Activated naive CD4-positive, alpha-beta T cell treated with anti-CD3 and anti-CD28 coated beads for 36 hours (primary cell): ENCODE measurements at regions of chr9 and their contacts with region 1.

Region 1: DNA sequence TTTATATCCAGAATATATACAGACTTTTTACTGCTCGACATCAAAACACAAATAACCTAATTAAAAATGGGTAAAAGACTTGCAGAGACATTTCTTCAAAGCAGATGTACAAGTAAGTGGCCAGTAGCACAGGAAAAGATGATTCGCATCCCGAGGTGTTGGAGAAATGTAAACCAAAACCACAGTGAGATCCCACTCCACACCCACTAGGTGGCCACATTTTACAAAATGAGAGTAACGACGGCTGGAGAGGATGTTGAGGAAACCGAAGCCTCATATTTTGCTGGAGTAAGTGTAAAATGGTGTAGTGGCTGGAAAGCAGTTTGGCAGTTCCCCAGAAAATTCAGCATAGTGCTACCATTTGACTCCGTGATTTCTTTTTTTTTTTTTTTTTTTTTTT is 21.2 kb upstream of the GBGT1 start:
- DNase-seq: peak; percentile 69
- H3K4me3 Mint-ChIP-seq: no peak overlapping the region
- H3K27ac Mint-ChIP-seq: no peak overlapping the region
- H3K4me1 Mint-ChIP-seq: peaks cover 14% of the 10 kb centered on the region
- H3K27me3 Mint-ChIP-seq: peaks cover 36% of the 10 kb centered on the region

Region 2: DNA sequence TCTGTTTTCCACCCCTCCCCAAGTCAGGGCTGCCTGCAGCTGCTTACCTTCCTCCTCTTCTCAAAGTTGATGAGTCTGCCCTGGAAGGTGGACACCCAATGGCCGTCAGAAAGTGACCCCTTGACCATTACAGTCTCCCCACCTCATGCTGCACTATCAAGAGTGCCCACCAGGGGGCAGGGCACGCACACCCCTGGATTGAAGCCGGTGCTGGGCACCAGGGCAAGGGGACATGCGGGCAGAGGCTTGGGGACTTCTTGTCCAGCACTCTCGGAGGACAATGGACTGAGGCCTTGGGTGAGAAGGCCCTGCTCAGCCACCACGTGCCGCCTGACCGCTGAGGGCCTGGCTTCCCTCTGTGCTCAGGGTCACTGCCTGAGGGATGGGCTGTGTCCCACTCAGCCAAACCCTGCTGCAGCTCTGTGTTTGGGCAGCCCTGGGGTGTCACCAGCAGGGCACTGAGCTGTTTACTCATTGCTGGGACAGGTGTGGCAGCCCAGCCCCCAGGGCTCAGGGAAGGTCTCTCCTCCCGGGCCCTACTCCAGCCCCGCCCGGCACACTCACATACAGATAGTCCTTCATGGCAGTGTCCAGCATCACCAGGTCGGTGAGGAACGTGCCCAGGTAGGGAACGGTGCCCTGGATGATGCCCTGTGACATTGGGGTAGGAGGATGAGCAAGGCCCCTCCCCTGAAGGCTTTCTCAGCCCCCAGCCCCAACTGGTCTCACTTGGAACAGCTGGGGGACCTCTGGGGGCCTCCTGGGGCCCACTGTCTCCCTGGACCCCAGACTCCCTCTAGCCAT is 81.6 kb before region 1 on chr9:
- CTCF ChIA-PET with region 1: interaction called, 4 read pairs
- intact Hi-C with region 1: loop called (anchors 2 kb)
- DNase-seq: peak; percentile 62
- H3K4me3 Mint-ChIP-seq: no peak overlapping the region
- H3K27ac Mint-ChIP-seq: peak overlapping the region; percentile 41
- H3K4me1 Mint-ChIP-seq: no peaks in the 10 kb centered on the region
- H3K27me3 Mint-ChIP-seq: no peaks in the 10 kb centered on the region

Region 3: GRCh38 chr9:133199648-133200321 is 14.8 kb after region 1 on chr9:
- CTCF ChIA-PET with region 1: interaction called, 16 read pairs
- intact Hi-C with region 1: no loop called
- DNase-seq: peak; percentile 59
- H3K4me3 Mint-ChIP-seq: peak overlapping the region; percentile 50
- H3K27ac Mint-ChIP-seq: no peak overlapping the region
- H3K4me1 Mint-ChIP-seq: peaks cover 3% of the 10 kb centered on the region
- H3K27me3 Mint-ChIP-seq: peaks cover 17% of the 10 kb centered on the region

Region 4: DNA sequence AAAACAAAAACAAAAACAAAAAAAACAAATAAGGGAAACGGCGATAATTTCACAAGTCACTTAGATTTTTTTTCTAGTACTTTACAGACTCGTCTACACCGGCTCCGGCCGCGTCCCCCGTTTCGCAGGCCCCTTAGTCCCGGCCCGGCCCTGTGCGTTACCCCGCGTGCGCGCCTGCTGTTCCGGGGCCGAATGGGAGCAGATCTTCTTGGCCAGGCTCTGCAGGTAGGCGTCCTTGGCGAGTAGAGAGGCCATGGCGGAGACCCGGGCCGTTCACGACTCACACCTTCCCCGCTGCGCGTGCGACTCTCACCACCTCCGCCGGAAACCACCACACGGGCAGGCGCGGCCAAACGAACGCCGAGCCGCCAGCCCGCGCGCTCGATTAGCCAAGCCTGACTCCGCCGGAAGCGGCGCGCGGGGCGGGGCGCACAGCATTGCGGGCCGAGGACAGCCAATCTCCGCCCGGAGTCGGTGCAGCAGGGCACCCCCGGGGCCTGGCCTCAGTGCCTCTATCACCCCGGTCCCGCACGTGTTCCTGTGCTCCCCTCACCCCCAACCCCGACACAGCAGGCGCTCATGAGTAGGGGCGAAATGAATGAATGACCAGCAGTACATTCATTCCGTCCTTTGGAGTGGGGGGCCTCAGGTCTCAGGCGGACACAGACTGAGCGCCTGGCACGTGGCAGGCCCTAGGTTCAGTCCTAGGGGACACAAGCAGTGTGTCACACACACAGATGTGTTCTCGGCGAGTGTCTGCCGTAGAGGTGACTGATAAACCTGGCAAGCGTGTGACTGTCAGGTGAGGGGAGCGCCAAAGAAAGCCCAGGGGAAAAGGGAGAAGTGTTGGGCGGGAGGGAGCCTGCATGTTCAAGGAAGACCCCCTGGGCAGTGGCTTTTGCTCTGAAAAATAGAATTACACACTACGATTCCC is 151.2 kb after region 1 on chr9 and contains the start of gene SURF6:
- CTCF ChIA-PET with region 1: interaction called, 13 read pairs
- intact Hi-C with region 1: no loop called
- DNase-seq: peak; percentile 95
- H3K4me3 Mint-ChIP-seq: peak within 1 kb of the TSS; percentile 97
- H3K27ac Mint-ChIP-seq: peak within 1 kb of the TSS; percentile 87
- H3K4me1 Mint-ChIP-seq: peaks cover 40% of the 10 kb centered on the region
- H3K27me3 Mint-ChIP-seq: no peaks in the 10 kb centered on the region
- total RNA-seq, gene SURF6: 13.6 to 13.8 TPM

Region 5: DNA sequence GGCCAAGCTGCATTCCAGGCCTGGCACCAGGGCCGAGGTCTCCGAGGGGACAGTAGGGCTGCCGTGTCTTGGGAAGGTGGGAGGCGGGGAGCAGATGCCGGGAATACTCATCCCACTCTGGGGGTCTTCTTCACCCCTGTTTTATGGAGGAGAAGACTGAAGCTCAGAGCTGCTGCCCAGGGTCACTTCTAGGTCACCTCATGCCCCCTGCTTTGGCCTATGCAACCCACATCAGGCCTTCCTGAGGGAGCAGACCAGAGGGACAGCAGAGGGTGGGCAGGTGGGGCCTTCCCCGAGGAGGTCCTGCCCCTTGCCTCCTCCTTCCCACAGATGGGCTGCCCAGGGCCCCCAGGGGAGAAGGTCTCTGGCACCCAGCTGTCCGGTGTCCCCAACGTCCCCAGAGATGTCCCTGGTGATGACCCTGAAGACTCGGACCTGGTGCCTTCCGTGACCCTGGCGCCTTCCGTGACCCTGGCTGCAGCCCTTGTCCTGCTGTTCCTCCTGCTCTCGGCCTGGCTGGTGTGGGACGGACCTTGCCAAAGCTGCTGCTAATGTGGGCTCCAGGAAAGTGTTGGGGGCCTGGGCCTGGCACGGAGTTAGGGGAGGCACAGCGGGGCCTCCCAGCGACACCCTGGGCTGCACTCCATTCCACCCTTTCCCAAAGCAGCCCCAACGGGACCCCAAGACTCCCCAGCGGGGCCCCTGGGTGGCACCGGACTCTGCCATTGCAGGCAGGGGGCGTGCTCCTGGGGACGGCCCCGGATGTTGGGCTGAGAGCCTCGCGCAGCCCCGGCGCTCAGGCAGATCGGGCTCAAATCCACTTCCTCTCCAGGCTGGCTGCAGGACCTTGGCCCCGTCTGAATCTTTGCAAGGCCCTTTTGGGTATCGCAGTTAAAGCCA is 300.6 kb after region 1 on chr9:
- CTCF ChIA-PET with region 1: interaction called, 16 read pairs
- intact Hi-C with region 1: loop called (anchors 1 kb)
- DNase-seq: no peak
- H3K4me3 Mint-ChIP-seq: no peak overlapping the region
- H3K27ac Mint-ChIP-seq: no peak overlapping the region
- H3K4me1 Mint-ChIP-seq: peaks cover 3% of the 10 kb centered on the region
- H3K27me3 Mint-ChIP-seq: no peaks in the 10 kb centered on the region